Activated T-helper 1 cell treated with anti-CD3 and anti-CD28 coated beads, Interleukin-12 subunit alpha, Interleukin-12 subunit beta, Interleukin-2, Interleukin-4 antibody, amounts not matched to agents 30 ng/mL and 10 ng/mL and 1 ng/mL, durations not matched to agents 14 hours and 24 hours and 36 hours (primary cell): ENCODE measurements at regions of chr1 and their contacts with region 1.

Region 1: GRCh38 chr1:58903514-58904298 is 119.9 kb upstream of the JUN start:
- DNase-seq: peak; percentile 81
- H3K4me3 Mint-ChIP-seq: peak overlapping the region; percentile 76
- H3K27ac Mint-ChIP-seq: peak overlapping the region; percentile 87
- H3K4me1 Mint-ChIP-seq: peaks cover 32% of the 10 kb centered on the region
- H3K27me3 Mint-ChIP-seq: no peaks in the 10 kb centered on the region

Region 2: DNA sequence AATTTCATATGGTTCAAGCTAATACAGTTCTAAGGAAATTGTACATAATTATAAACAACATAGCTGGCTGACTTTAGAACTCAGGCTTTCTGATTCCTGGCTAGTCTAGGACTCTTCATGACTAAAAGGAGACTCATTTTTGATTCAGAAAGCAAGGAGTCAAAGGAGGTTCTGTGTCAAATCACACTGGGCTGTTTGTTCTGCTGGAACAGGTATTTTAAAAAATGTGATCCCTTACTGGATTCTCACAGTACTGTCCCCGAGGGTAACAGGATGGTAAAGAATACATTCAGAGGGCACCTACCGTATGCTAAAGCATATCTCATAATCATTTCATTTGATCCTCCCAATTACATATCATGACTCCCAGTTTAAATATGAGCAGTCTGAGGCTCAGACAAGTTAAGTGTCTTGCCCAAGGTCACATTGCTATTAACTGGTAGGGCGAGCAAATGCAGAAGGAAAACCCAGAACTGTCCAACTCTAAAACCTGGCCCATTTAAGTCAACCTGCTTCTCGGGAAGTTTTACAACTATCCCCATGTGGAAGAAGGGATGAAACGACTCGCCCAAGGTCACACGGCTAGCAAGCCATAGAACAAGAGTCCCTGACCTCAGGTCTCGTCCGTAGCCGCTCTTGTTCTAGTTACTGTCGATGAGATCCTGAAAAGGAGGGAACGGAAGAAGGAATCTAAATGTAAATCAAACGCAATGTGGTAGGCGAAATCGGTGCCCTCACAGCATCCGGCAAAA is 204.5 kb before region 1 on chr1:
- intact Hi-C with region 1: loop called (anchors 1 kb)
- DNase-seq: no peak
- H3K4me3 Mint-ChIP-seq: peak overlapping the region; percentile 99
- H3K27ac Mint-ChIP-seq: peak overlapping the region; percentile 98
- H3K4me1 Mint-ChIP-seq: peaks cover 9% of the 10 kb centered on the region
- H3K27me3 Mint-ChIP-seq: no peaks in the 10 kb centered on the region

Region 3: DNA sequence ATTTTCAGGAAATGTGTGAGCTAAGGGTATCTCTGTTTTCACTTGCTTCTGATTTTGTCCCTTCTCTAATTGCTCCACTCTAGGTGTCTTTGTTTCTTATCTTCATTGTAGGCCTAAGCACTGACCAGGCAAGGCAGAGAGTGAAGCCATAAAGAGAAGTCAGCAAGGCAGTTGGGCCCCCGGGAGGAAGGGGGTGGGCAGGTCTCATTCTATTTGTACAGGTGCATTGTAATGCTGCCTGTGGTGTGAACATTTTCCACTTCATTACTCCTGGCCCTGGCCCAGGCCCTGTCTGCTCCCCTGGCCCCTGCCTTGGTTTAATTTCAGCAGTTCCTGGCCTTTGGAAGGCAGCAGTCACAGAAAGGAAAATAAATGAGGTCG is 33.4 kb before region 1 on chr1:
- intact Hi-C with region 1: no loop called
- DNase-seq: no peak
- H3K4me3 Mint-ChIP-seq: no peak overlapping the region
- H3K27ac Mint-ChIP-seq: no peak overlapping the region
- H3K4me1 Mint-ChIP-seq: no peaks in the 10 kb centered on the region
- H3K27me3 Mint-ChIP-seq: peaks cover 2% of the 10 kb centered on the region

Region 4: GRCh38 chr1:58884706-58885661 is 18.7 kb before region 1 on chr1:
- intact Hi-C with region 1: loop called (anchors 2 kb)
- DNase-seq: peak; percentile 3
- H3K4me3 Mint-ChIP-seq: peak overlapping the region; percentile 65
- H3K27ac Mint-ChIP-seq: peak overlapping the region; percentile 78
- H3K4me1 Mint-ChIP-seq: peaks cover 70% of the 10 kb centered on the region
- H3K27me3 Mint-ChIP-seq: peaks cover 5% of the 10 kb centered on the region

Region 5: DNA sequence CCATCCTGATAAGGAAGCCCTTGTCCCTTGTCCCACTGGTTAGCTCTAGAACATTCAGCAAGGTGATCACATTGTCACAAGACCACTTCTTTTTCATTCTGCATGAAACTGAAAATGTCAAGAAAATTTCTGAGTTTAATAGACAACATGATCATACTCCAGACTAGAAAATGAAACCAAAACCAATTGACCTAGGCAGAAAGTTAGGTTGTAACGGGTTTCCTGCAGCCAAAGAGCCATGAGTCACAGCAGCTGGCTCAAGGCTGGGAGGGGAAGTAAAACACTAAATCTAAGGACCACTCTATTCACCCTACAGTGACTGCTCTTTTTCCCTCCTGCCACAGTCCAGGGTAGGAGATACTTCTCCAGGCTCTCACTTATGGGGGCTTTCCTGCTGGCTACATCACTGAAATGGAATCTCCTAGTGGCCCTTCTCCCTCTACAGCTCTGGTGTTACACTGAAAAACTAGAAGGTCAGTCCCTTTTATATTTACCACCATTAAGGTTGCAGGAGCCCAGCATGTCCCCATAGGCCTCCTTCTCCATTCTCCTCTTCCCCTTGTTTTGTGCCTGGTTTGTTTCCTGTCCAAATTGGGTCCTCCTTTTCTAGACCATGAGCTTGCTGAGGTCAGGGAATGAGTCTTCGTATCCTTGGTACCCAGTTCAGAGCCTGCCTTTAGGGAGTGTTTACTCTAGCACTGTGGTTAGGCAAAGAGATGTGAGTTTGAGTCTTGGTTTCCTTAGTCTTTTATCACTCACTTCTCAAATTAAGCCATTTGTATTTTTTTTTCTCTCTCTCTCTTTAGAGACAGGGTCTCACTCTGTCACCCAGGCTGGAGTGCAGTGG is 116.7 kb after region 1 on chr1:
- intact Hi-C with region 1: loop called (anchors 1 kb)
- DNase-seq: peak; percentile 51
- H3K4me3 Mint-ChIP-seq: peak overlapping the region; percentile 78
- H3K27ac Mint-ChIP-seq: peak overlapping the region; percentile 94
- H3K4me1 Mint-ChIP-seq: peaks cover 68% of the 10 kb centered on the region
- H3K27me3 Mint-ChIP-seq: no peaks in the 10 kb centered on the region

Region 6: DNA sequence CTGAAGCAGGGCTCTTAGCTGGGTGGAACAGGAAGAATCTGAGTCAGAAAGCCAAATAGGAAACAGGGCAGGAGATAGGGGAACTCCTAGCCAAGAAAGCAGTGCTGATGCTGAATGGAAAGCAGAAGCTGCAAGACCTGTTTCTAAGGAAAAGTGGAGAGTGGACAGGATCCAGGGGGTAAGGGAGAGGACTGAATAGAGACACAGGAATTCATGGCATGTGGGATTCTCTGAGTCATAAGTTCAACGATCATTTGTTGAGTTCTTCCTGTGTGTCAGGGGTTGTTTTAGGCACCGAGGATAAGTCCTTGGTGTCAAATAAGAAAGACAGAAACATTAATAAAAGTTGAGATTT is 239.4 kb after region 1 on chr1:
- intact Hi-C with region 1: loop called (anchors 5 kb)
- DNase-seq: no peak
- H3K4me3 Mint-ChIP-seq: peak overlapping the region; percentile 8
- H3K27ac Mint-ChIP-seq: peak overlapping the region; percentile 62
- H3K4me1 Mint-ChIP-seq: peaks cover 86% of the 10 kb centered on the region
- H3K27me3 Mint-ChIP-seq: no peaks in the 10 kb centered on the region